ENCODE measurements at regions of chr2 and their contacts with region 1.

Region 1: DNA sequence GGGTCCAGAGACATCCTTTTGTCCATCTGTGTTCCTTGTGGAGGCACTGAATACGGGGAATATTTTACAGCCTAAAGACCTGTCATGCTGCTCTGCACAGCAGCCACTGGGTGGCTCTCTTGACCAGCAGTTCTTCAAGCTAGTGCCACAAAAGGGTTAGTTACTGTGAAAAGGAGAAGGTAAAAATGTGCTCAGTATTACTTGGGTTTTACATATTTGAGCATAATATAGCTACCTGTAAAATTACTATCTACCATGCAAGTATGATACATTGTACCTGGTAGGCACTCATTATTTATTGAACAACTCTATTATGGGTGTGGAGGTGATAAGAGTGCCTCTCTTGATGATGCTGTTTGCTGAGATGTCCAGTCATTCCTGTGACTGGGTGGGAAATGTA is 23.6 kb downstream of the FZD5 start:
- DNase-seq: peak; percentile 65
- CTCF ChIP-seq: peak; percentile 92

Region 2: DNA sequence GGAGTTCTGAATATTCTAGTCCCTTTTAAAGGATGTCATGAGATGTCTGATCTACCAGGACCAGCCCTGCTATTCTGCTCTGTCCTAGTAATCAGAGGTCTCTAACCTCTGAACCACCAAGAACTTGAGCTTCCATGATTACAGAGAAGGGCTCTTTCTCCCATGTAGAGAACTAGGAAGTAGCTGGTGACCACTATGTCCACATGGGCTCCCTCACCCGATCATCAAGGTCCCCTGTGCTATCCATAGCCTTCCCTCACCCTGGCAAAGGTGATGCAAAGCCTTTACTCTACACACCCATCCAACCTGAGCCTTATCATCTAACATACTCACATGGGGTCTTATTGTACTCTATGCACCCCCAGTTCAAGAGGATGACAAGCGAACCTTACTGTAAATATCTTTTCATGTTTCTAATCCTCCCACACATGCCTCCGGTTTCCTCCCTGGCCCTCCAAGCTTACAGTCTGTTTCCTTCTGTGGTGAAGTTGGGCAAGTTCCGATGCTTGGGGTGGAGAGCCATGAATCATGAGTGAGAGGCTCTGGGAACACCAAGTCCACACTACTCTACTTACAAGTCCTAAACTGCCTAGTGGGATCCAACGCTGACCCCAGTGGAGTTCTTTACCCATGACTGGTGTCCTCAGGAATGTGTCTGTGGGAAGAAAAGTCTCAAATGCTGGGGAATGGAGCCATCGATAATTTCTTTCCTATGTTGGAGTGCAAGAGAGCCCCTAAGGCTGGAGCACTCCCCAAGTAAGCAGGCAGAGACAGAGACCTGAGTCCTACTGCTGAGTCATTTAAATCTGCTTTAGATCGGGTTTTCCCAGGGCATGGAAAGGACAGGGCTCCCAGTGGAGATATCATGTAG is 507.1 kb before region 1 on chr2:
- CTCF ChIA-PET with region 1: no interaction called
- POLR2A ChIA-PET with region 1: no interaction called
- DNase-seq: no peak
- CTCF ChIP-seq: no peak

Region 3: DNA sequence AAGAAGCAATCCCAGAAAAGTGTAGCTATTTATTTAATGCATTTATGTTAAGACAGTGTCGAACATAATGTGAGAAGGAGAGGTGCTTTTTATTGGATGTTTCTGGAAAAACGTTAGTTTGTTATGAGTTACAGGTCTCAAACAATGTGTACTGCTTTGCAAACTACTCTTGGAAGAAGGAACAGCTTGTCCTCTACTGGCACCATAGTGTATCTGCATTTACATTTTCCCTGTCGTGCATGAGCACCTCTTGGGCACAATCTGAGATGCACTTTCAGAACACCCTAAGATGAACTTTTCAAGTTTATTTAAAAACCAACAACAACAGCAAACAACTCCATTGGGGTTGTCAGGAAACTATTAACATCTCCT is 11.9 kb before region 1 on chr2:
- CTCF ChIA-PET with region 1: interaction called, 40 read pairs
- POLR2A ChIA-PET with region 1: no interaction called
- DNase-seq: no peak
- CTCF ChIP-seq: peak; percentile 17

Region 4: DNA sequence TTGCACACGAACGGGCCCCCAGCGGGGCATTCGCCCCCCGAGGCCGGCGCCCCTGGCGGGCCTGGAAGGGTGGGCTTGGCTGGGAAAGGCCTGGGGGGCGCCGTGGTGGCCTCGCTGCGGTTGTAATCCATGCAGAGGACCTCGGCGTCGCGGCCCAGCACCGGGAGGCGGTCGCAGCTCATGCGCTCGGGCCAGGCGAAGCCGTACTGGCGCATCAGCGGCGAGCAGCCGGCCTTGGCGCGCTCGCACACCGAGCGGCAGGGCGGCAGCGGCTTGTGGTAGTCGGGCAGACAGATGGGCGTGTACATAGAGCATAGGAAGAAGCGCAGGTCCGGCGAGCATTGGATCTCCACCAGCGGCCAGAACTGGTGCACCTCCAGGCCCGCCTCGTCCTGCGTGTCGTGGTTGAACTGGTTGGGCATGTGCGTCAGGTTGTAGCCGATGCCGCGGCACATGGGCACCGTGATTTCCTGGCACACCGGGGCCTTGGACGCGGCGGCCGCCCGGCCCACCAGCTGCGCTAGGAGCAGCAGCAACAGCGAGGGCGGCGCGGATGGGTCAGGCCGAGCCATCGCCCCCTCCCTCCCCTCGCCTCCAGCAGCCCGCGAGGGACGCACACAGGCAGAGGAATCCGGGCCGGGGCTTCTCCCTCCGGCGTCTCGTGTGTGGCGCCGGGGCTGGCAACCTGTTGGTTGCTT is 22.2 kb after region 1 on chr2:
- CTCF ChIA-PET with region 1: interaction called, 12 read pairs
- POLR2A ChIA-PET with region 1: interaction called, 3 read pairs
- DNase-seq: peak; percentile 31
- CTCF ChIP-seq: no peak

Region 5: GRCh38 chr2:208025037-208025813 is 279.1 kb after region 1 on chr2 and contains the start of gene PLEKHM3:
- CTCF ChIA-PET with region 1: interaction called, 70 read pairs
- POLR2A ChIA-PET with region 1: no interaction called
- DNase-seq: peak; percentile 83
- CTCF ChIP-seq: no peak

Region 6: DNA sequence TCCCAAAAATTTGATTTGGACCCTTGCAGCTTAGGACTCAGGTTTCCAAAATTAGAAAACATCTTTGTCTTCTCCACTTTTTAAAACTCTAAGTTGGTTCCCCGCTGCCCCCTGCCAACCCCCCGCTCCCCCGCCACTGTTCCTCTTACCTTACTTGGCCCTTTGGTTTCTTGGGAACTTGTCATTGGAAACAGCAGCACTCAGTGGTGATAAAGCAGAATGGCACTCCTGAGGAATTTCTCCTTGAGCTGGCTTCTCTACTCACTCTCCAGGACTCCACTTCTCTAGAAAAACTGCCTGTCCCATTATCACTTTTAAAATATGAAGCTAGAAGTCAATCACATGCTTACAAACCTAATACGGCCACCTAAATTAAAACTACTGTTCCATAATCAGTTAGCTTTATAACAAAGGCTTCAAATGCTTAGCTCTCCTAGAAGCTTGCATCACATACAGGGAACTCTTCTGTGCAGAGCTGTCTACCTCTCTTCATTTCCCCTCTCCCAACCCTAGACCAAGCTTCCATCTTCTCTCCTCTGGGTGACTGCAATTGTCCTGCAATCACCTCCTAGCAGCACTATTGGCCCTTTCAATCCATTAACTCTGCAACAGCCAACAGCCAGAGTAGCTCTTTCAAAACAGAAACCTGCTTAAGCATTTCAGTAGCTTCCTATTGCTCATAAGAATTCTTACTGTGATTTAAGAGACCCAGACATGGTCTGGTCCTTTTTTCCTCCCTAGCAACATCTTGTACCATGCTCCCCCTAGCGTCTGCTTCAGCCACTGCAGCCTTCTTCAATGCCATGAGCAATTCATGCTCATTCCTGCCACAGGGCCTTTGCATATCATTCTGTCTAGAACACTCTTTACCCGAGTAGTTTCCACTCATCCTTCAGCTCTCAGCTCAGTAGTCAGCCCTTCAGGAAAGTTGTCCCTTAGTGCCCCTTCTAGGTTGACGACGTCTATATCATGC is 294.4 kb after region 1 on chr2:
- CTCF ChIA-PET with region 1: interaction called, 153 read pairs
- POLR2A ChIA-PET with region 1: no interaction called
- DNase-seq: peak; percentile 62
- CTCF ChIP-seq: peak; percentile 75

Region 7: GRCh38 chr2:208072250-208072892 is 326.2 kb after region 1 on chr2:
- CTCF ChIA-PET with region 1: interaction called, 119 read pairs
- POLR2A ChIA-PET with region 1: no interaction called
- DNase-seq: peak; percentile 63
- CTCF ChIP-seq: peak; percentile 86

Measured in GM10248 (cell line).